Esophagus muscularis mucosa (tissue), 4 donors: ENCODE measurements at regions of chr9 and their contacts with region 1.

Region 1: DNA sequence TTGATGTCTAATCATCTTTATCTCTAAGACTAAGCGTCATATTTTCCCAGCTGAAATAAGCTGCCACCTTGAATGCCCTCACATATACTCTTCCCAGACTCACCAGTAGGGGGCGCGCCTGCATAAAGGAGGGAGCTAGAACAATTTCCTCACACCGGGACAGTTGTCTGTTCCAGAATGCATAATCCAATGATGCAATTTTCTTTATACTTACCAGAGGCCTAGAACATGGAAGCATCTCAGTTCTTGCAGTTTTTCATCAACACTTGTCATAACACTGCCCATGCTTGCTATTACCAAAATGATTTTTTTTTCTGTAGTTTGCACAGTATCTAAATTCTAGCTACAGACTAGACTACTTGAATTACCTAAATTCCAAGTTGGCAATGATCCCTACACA is 203.9 kb downstream of the FRMD3 start:
- DNase-seq: no peak
- H3K4me3 ChIP-seq: no peak overlapping the region
- H3K27ac ChIP-seq: no peak overlapping the region
- H3K4me1 ChIP-seq: peaks cover 0 to 4% (median 0%) of the 10 kb centered on the region in 4 donors
- H3K27me3 ChIP-seq: no peaks in the 10 kb centered on the region
- CTCF ChIP-seq: peak; percentile 86 to 94 (median 89)
- EP300 ChIP-seq: no peak
- POLR2A ChIP-seq: no peak

Region 2: GRCh38 chr9:82466616-82467260 is 867.6 kb before region 1 on chr9:
- intact Hi-C with region 1: no loop called
- DNase-seq: no peak
- H3K4me3 ChIP-seq: no peak overlapping the region
- H3K27ac ChIP-seq: no peak overlapping the region
- H3K4me1 ChIP-seq: peaks cover 0 to 6% (median 2%) of the 10 kb centered on the region in 4 donors
- H3K27me3 ChIP-seq: no peaks in the 10 kb centered on the region
- CTCF ChIP-seq: peak in 2 of 3 experiments; percentile 6 to 13
- EP300 ChIP-seq: no peak
- POLR2A ChIP-seq: no peak

Region 3: DNA sequence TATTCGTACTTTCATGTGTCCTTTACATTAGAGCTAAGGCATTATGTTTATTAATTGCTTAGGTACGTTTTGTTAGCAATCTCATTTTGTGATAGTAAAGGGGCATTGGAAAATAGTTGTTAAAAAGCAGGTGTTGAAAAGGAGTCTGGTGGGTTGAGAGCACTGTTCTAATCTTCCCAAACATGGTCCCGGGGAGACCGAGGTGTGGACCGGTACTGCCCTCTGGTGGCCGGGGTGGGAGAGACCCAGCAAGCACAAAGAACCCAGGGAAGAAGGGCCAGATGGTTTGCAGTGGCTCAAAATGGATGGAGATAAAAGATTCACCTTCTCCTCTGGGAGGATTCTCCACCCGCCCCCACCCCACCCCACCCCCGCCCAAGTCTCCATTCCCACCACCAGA is 314.8 kb after region 1 on chr9:
- intact Hi-C with region 1: loop called (anchors 10 kb)
- DNase-seq: no peak
- H3K4me3 ChIP-seq: no peak overlapping the region
- H3K27ac ChIP-seq: no peak overlapping the region
- H3K4me1 ChIP-seq: no peaks in the 10 kb centered on the region
- H3K27me3 ChIP-seq: no peaks in the 10 kb centered on the region
- CTCF ChIP-seq: peak; percentile 55 to 80 (median 72)
- EP300 ChIP-seq: no peak
- POLR2A ChIP-seq: no peak